ENCODE measurements at regions of chr19 and their contacts with region 1.

Region 1: DNA sequence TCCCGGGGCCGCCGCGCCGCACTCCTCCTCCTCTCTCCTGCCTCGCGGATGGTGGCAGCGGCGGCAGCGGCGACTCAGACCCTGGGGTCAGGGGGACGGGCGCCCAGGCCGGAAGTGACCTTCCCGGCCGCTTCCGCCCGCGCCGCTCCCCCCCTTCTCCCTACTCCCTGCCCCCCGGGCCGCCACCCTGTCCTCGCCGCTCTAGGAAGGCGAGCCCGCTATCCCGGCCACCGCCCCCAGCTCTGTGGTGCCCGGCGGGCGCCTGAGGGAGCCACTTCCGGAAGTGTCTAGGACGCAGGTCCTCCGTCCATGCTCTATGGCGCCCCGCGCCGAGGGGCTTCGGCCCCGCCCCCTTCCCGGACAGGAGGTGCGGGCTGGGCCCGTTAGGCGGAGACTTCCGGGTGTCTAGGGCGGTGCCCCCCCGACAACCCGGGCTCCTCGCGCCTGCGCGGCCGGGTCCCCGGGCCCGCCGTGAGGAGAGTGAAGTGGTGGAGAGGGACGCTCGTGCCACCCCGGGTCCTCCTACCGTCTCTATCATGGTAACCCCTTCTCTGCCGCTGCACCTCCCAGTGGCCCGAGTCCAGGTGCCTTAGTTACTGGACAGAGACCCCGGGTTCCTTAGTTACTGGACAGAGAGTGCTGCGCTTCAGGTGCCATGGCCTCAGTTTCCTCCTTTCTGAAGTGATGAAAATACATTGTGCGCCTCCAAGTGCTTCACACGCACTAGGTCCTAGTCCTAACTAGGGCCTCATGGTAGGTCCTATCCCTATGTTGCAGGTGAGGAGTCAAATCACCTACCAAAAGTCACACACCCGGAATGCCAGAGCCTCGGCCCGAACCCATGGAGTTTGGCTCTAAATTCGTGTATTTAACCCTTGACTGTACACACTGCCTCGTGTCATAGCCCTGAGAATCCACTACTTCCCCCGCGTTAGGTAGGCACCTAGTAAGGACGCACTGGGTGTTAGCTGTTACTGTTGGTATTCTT is at the start of gene ZNF787:
- DNase-seq: peak; percentile 94 to 98 (median 98)
- ATAC-seq: peak; percentile 88
- H3K4me3 ChIP-seq: peak within 1 kb of the TSS; percentile 79
- H3K4me3 Mint-ChIP-seq: peak within 1 kb of the TSS; percentile 85 to 93 (median 88)
- H3K27ac ChIP-seq: peak within 1 kb of the TSS; percentile 97
- H3K27ac Mint-ChIP-seq: peak within 1 kb of the TSS; percentile 87 to 98 (median 95)
- H3K4me1 ChIP-seq: peaks cover 8 to 34% of the 10 kb centered on the region in 2 donors
- H3K4me1 Mint-ChIP-seq: peaks cover 17 to 72% (median 58%) of the 10 kb centered on the region in 7 donors
- H3K27me3 ChIP-seq: no peaks in the 10 kb centered on the region
- H3K27me3 Mint-ChIP-seq: no peaks in the 10 kb centered on the region
- total RNA-seq, gene ZNF787: 19.7 to 41.2 (median 33.0) TPM

Region 2: DNA sequence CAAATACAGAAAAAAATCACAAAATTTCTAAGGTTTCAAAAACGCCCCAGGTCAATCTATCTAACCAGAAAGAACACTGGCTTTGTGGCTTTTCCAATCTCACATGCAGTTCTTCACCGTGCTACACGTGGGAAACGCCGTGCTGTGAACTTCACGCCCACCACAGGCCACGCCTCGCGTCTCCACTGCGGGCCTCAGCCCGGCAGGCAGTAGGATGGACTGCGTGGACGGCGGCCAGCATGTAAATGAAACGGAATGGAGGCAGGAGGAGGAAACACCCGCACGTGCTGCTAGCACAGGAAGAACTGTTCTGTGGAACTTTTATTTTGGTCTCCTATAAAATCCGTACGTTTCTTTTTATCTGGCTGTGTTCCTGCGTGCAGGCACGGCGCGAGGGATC is 24.2 kb before region 1 on chr19:
- CTCF ChIA-PET with region 1: no interaction called
- POLR2A ChIA-PET with region 1: no interaction called
- intact Hi-C with region 1: no loop called
- DNase-seq: no peak
- ATAC-seq: no peak
- H3K4me3 ChIP-seq: no peak overlapping the region
- H3K4me3 Mint-ChIP-seq: no peak overlapping the region
- H3K27ac ChIP-seq: no peak overlapping the region
- H3K27ac Mint-ChIP-seq: no peak overlapping the region
- H3K4me1 ChIP-seq: no peaks in the 10 kb centered on the region
- H3K4me1 Mint-ChIP-seq: peaks cover 0 to 19% (median 8%) of the 10 kb centered on the region in 7 donors
- H3K27me3 ChIP-seq: no peaks in the 10 kb centered on the region
- H3K27me3 Mint-ChIP-seq: no peaks in the 10 kb centered on the region

Region 3: DNA sequence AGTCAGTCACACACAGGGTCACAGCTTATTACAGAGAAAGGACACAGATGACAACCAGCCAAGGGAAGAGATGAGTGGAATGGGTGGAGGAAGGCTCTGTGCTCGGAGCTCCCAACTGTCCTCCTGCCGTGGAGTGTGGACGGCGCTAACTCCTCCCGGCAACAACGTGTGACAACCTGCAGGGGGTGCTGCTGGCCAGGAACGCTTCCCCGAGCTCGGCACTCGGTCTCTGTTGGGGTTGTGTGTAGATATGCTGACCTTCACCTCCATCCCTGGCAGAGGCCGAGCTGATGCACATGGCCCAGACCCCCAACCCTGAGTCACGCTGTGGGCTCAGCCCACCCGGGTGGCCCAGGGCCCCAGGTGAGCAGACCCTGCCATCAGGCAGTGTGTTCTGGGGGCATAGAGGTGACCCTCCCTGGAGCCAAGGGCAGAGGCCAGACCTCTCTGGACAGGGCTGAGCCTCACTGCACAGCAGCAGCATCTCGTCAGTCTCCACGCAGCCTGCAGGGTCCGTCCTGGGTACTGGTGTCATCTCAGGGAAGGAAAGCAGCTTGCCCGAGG is 33.7 kb after region 1 on chr19:
- CTCF ChIA-PET with region 1: no interaction called
- POLR2A ChIA-PET with region 1: no interaction called
- intact Hi-C with region 1: loop called in 1 of 2 experiments (anchors 5 kb)
- DNase-seq: no peak
- ATAC-seq: no peak
- H3K4me3 ChIP-seq: no peak overlapping the region
- H3K4me3 Mint-ChIP-seq: no peak overlapping the region
- H3K27ac ChIP-seq: no peak overlapping the region
- H3K27ac Mint-ChIP-seq: peak overlapping the region in 1 of 9 donors; percentile 17
- H3K4me1 ChIP-seq: no peaks in the 10 kb centered on the region
- H3K4me1 Mint-ChIP-seq: peaks cover 5 to 23% (median 20%) of the 10 kb centered on the region in 7 donors
- H3K27me3 ChIP-seq: no peaks in the 10 kb centered on the region
- H3K27me3 Mint-ChIP-seq: no peaks in the 10 kb centered on the region